ENCODE measurements at regions of chr5 and their contacts with region 1.

Region 1: DNA sequence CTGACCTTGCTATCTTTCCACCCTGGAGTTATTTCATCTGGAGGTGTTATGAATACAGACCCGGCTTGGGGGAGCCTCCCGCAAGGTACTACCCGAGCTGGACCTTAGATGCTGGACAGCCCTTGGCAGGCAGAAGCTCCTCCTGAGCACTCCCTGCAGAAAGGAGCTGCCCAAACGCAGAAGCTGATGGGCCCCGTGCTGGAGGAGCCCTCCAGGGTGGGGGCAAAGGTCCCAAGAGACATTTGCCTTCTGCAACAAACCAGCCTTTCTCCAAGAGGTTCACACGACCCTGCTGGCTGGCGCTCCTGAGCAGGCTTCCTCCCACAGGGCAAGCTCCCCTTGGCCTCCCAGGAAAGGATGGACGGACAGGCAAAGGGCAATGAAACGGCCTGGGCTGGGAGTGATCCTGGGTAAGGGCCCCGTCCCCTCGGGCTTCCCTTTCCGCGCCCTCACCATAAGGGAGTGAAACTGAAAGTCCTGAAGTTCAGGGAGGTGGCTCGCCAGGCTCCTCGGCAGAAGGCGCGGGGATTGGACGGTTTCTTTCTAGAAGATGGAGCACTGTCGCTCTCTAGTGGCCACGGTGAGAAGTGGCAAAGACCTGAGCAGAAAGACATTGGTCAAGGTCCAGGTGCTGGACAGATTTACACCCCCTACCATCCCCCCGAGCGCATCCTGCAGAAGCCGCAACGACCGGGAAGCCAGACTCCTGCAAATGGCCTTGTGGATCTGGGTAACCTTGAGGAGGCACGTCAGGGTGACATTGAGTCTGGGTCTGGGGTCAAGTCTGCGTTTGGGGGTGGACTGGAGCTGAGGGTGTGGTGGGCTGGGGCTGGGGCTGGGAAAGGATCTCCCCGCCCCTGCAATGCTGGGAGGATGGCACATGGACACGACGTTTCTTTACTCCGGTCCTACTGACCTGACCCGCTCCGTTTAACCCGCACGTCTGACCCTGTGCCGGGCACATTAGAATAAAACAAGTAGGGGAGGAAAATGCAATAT is 56.4 kb downstream of the NEURL1B start:
- DNase-seq: peak; percentile 78
- ATAC-seq: peak; percentile 92
- H3K4me3 ChIP-seq: peak overlapping the region; percentile 61
- H3K27ac ChIP-seq: peak overlapping the region; percentile 76
- H3K4me1 ChIP-seq: peaks cover 5% of the 10 kb centered on the region; the same call in 1 of the 2 replicates
- H3K27me3 ChIP-seq: peaks cover 26% of the 10 kb centered on the region
- CTCF ChIP-seq: peak; percentile 99
- POLR2A ChIP-seq: no peak
- RAD21 ChIP-seq: peak; percentile 97

Region 2: DNA sequence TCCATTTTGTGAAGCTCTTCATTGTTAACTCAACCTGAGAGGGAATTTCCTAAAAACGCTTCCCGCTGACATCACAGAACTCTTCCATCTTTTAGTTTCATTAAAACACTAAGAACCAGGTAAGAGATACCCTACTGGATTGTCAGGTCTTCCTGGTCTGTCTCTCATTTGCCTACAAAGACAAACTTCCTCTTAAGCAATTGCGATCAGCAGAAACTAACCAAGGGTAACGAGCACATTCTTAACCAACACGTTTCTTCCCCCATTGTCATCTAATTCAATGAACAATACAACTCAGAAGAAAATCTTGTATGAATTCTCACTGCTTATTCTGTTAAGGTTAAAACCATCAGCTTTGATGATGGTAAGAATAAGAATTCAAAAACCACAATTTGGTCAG is 697.5 kb before region 1 on chr5:
- CTCF ChIA-PET with region 1: no interaction called
- POLR2A ChIA-PET with region 1: no interaction called
- dilution Hi-C with region 1: no loop called
- in situ Hi-C with region 1: no loop called
- intact Hi-C with region 1: no loop called
- DNase-seq: no peak
- ATAC-seq: no peak
- H3K4me3 ChIP-seq: no peak overlapping the region
- H3K27ac ChIP-seq: no peak overlapping the region
- H3K4me1 ChIP-seq: peaks cover 8% of the 10 kb centered on the region
- H3K27me3 ChIP-seq: no peaks in the 10 kb centered on the region
- CTCF ChIP-seq: no peak
- POLR2A ChIP-seq: no peak
- RAD21 ChIP-seq: no peak

Region 3: GRCh38 chr5:172479044-172479783 is 218.2 kb before region 1 on chr5:
- CTCF ChIA-PET with region 1: interaction called, 24 read pairs
- POLR2A ChIA-PET with region 1: no interaction called
- dilution Hi-C with region 1: no loop called
- in situ Hi-C with region 1: loop called (anchors 5 kb)
- intact Hi-C with region 1: loop called (anchors 1 kb)
- DNase-seq: peak; percentile 88
- ATAC-seq: peak; percentile 100
- H3K4me3 ChIP-seq: no peak overlapping the region
- H3K27ac ChIP-seq: no peak overlapping the region
- H3K4me1 ChIP-seq: no peaks in the 10 kb centered on the region
- H3K27me3 ChIP-seq: peaks cover 9% of the 10 kb centered on the region
- CTCF ChIP-seq: peak; percentile 98
- POLR2A ChIP-seq: peak; percentile 57
- RAD21 ChIP-seq: peak; percentile 96

Region 4: DNA sequence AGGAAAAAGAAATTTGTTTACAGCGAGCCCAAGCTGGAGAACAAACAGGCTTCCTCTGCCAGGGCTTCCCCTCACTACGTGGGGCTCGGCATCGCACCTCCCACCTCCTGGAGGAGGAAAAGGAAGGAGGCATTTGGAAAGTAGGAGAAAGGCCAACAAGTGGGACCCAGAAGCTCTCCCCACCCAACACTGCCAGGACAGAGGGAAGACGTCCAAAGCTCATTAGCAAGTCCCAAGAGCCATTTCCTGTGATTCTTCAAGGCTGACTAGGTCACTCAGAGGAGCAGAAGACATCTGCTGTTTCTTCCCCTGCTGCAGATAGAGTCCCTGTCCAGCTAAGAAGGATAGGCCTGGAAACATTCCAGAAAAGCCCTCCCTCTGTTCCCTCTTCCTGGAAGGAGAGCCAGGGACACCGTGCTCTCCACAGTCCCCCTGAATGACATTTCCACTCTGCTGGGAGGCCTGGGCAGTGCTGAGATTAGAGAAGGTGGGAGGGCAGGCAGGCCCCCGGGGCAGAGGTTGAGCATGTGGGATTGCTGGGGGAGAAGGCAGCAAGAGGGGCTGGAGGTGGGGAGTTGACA is 113.4 kb before region 1 on chr5:
- CTCF ChIA-PET with region 1: no interaction called
- POLR2A ChIA-PET with region 1: no interaction called
- dilution Hi-C with region 1: no loop called
- in situ Hi-C with region 1: no loop called
- intact Hi-C with region 1: no loop called
- DNase-seq: no peak
- ATAC-seq: no peak
- H3K4me3 ChIP-seq: no peak overlapping the region
- H3K27ac ChIP-seq: no peak overlapping the region
- H3K4me1 ChIP-seq: no peaks in the 10 kb centered on the region
- H3K27me3 ChIP-seq: peaks cover 87% of the 10 kb centered on the region
- CTCF ChIP-seq: no peak
- POLR2A ChIP-seq: no peak
- RAD21 ChIP-seq: no peak

Region 5: DNA sequence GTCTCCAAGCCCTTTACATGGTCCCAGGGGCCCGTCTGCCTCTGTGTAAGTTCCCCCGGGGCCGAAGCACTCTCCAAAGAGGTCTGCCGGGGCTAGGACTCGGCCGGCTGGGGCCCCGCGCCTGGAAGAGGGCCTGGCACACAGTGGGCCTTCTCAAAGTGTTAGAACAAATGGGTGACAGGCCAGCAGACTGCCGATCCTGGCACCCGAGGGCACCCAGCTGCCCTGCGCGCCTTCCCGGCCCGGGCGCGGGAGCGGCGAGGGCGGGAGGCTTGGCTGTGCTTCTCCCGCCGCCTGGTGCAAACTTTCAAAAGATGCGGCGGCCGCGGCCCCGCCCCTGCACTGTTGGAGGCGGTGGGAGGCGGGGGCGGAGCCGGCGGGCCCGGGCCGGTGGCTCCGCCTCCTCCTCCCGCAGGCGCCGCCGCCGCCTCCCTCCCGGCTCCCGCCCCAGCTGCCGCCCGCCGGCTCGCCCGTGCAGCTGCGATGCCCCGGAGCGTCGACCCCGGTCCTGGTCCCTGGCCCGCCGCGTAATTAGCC is 56.5 kb before region 1 on chr5 and contains the start of gene NEURL1B:
- CTCF ChIA-PET with region 1: no interaction called
- POLR2A ChIA-PET with region 1: interaction called, 4 read pairs
- dilution Hi-C with region 1: no loop called
- in situ Hi-C with region 1: no loop called
- intact Hi-C with region 1: loop called (anchors 1 kb)
- DNase-seq: peak; percentile 43
- ATAC-seq: peak; percentile 95
- H3K4me3 ChIP-seq: peak within 1 kb of the TSS; percentile 85
- H3K27ac ChIP-seq: peak within 1 kb of the TSS; percentile 53; the same call in 1 of the 2 replicates
- H3K4me1 ChIP-seq: peaks cover 5% of the 10 kb centered on the region; the same call in 1 of the 2 replicates
- H3K27me3 ChIP-seq: peaks cover 10% of the 10 kb centered on the region; the same call in 1 of the 2 replicates
- CTCF ChIP-seq: no peak
- POLR2A ChIP-seq: peak; percentile 43; the same call in 1 of the 2 replicates
- RAD21 ChIP-seq: no peak
- total RNA-seq, gene NEURL1B: 1.8 and 1.9 TPM in 2 replicates

Region 6: GRCh38 chr5:172659909-172660628 is 37.4 kb before region 1 on chr5:
- CTCF ChIA-PET with region 1: interaction called, 8 read pairs
- POLR2A ChIA-PET with region 1: no interaction called
- dilution Hi-C with region 1: no loop called
- in situ Hi-C with region 1: no loop called
- intact Hi-C with region 1: loop called (anchors 5 kb)
- DNase-seq: peak; percentile 94
- ATAC-seq: peak; percentile 89
- H3K4me3 ChIP-seq: no peak overlapping the region
- H3K27ac ChIP-seq: peak overlapping the region; percentile 91
- H3K4me1 ChIP-seq: peaks cover 40% of the 10 kb centered on the region
- H3K27me3 ChIP-seq: no peaks in the 10 kb centered on the region
- CTCF ChIP-seq: 0 out of 2 replicates have a peak, but pooled peaks have one; percentile 11
- POLR2A ChIP-seq: peak; percentile 44; the same call in 1 of the 2 replicates
- RAD21 ChIP-seq: no peak